MCF 10A (cell line): ENCODE measurements at regions of chr1 and their contacts with region 1.

Region 1: DNA sequence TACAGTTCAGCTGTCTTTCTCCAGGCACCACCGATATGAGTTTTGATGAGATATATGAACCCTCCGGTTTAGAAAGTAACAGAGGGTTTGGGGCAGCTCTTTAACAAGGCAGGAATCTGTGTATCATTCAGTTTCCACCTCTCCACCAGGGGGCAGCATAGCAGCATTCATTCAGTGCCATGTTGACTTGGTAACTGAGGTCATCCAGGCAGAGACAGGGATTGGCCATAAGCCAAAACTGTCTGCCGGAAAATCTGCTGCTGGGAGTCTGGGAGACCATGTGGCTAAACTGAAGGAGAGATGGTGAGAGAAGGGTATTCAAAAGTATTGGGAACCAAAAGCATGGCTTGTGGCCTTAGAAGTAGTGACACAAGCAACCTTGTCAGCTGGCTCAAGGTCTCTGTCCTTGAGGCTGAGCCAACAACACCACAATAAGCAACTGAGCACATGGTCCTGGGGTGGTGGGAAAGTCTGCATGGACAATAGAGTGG is 98.5 kb downstream of the LMX1A start:
- DNase-seq: peak; percentile 97
- H3K4me3 Mint-ChIP-seq: no peak overlapping the region
- H3K27ac Mint-ChIP-seq: no peak overlapping the region
- H3K4me1 Mint-ChIP-seq: peaks cover 11% of the 10 kb centered on the region
- H3K27me3 Mint-ChIP-seq: peaks cover 45% of the 10 kb centered on the region
- CTCF ChIP-seq: peak; percentile 94

Region 2: GRCh38 chr1:165129568-165130164 is 128.3 kb before region 1 on chr1:
- CTCF ChIA-PET with region 1: interaction called, 24 read pairs
- POLR2A ChIA-PET with region 1: no interaction called
- intact Hi-C with region 1: loop called (anchors 5 kb)
- DNase-seq: peak; percentile 91
- H3K4me3 Mint-ChIP-seq: no peak overlapping the region
- H3K27ac Mint-ChIP-seq: no peak overlapping the region
- H3K4me1 Mint-ChIP-seq: peaks cover 5% of the 10 kb centered on the region
- H3K27me3 Mint-ChIP-seq: peaks cover 82% of the 10 kb centered on the region
- CTCF ChIP-seq: peak; percentile 79

Region 3: GRCh38 chr1:165162671-165163241 is 95.3 kb before region 1 on chr1:
- CTCF ChIA-PET with region 1: interaction called, 17 read pairs
- POLR2A ChIA-PET with region 1: no interaction called
- intact Hi-C with region 1: no loop called
- DNase-seq: peak; percentile 81
- H3K4me3 Mint-ChIP-seq: no peak overlapping the region
- H3K27ac Mint-ChIP-seq: no peak overlapping the region
- H3K4me1 Mint-ChIP-seq: no peaks in the 10 kb centered on the region
- H3K27me3 Mint-ChIP-seq: peaks cover 14% of the 10 kb centered on the region
- CTCF ChIP-seq: no peak

Region 4: DNA sequence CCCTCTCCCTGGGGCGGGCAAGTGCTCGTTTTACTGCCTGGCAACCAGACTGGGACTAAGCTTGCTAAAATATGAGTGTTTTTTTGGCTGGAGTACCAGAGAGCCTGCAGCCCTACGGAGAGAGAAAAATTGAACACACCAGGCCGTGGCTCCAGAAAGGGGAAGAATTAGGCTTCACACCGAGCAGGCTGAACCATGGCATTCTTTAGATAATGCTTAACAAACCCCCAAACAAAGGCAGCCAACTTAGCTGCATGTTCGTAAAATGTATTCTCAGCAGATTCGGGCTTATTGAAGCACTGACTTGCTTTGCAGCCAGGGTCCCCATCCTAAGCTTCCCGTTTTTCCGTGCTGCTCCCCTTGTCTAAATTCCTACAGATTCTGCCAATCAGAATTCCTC is 21.9 kb after region 1 on chr1:
- CTCF ChIA-PET with region 1: interaction called, 26 read pairs
- POLR2A ChIA-PET with region 1: no interaction called
- intact Hi-C with region 1: no loop called
- DNase-seq: no peak
- H3K4me3 Mint-ChIP-seq: no peak overlapping the region
- H3K27ac Mint-ChIP-seq: no peak overlapping the region
- H3K4me1 Mint-ChIP-seq: no peaks in the 10 kb centered on the region
- H3K27me3 Mint-ChIP-seq: peaks cover 64% of the 10 kb centered on the region
- CTCF ChIP-seq: no peak

Region 5: GRCh38 chr1:165350840-165351239 is 92.8 kb after region 1 on chr1:
- CTCF ChIA-PET with region 1: interaction called, 24 read pairs
- POLR2A ChIA-PET with region 1: no interaction called
- intact Hi-C with region 1: no loop called
- DNase-seq: no peak
- H3K4me3 Mint-ChIP-seq: no peak overlapping the region
- H3K27ac Mint-ChIP-seq: no peak overlapping the region
- H3K4me1 Mint-ChIP-seq: no peaks in the 10 kb centered on the region
- H3K27me3 Mint-ChIP-seq: peaks cover 93% of the 10 kb centered on the region
- CTCF ChIP-seq: no peak

Region 6: DNA sequence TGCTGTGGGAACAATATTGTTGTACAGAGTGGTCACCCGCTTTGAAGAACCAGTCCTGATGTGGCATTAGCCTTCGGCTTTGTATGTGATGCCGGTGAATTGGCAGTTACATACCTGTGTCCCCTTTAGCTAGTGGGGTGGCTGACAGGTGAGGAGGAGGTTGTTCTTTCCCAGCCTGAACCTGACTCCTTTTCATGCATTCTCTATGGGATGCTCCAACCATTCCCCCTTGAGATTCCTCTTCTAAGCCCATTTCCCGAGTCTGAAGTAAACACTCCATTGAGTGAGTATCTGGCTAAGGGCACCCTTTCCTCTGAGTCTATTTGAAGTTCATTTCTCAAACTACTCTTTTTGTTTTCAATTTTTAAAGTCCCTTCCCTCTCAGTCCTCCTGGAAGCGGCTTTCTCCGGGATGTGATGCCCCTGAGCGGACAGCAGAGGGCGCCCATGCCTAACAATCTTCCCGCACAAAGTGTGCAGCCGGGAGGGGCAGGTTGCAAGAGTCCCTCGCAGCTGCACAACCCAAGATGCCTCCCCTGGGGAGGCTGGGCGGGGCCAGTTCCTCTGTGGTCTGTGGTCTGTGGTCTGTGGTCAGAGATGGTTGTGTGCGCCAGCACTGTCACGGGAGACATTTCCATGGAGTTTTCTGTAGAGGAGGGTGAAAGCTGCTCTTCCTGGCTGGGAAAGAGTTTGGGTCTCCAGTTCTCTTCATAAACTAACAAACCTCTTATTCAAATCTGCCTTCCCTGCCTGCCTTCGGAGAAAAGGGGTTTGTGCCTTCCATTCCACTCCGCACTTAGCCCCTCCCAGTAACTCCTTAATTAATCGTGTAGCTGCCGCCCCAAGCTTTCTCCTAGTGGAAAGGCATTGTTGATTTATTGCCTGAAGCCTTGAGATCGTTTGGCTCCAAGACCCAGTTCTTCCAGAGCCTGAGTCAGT is 134.9 kb after region 1 on chr1:
- CTCF ChIA-PET with region 1: interaction called, 67 read pairs
- POLR2A ChIA-PET with region 1: interaction called, 3 read pairs
- intact Hi-C with region 1: no loop called
- DNase-seq: peak; percentile 88
- H3K4me3 Mint-ChIP-seq: peak overlapping the region; percentile 47
- H3K27ac Mint-ChIP-seq: no peak overlapping the region
- H3K4me1 Mint-ChIP-seq: peaks cover 18% of the 10 kb centered on the region
- H3K27me3 Mint-ChIP-seq: peaks cover 83% of the 10 kb centered on the region
- CTCF ChIP-seq: peak; percentile 98

Region 7: DNA sequence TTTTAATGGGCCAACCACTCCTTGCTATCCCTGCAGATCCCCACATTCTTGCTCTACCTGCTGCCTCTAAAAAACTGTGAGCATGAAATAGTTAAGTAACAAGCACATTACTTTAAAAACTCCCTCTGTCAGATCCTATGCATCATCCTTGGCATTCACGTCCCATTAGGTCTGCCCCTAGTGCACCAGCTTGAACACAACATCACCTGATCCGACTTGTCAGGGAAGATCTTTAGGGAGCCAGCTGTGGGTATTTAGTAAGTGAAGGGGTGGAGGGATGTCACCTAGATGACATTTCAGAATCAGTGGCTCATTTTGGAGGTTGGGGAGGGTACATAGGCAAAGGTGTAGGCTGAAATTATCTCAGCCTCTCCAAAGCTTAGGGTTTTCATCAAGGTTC is 153.4 kb after region 1 on chr1:
- CTCF ChIA-PET with region 1: no interaction called
- POLR2A ChIA-PET with region 1: no interaction called
- intact Hi-C with region 1: no loop called
- DNase-seq: no peak
- H3K4me3 Mint-ChIP-seq: no peak overlapping the region
- H3K27ac Mint-ChIP-seq: no peak overlapping the region
- H3K4me1 Mint-ChIP-seq: no peaks in the 10 kb centered on the region
- H3K27me3 Mint-ChIP-seq: peaks cover 48% of the 10 kb centered on the region
- CTCF ChIP-seq: no peak